AG04449 (cell line): ENCODE measurements at regions of chr2 and their contacts with region 1.

Region 1: GRCh38 chr2:235595422-235596010 is 101.7 kb downstream of the AGAP1 start:
- DNase-seq: no peak
- H3K4me3 ChIP-seq: no peak overlapping the region
- CTCF ChIP-seq: peak; percentile 87

Region 2: GRCh38 chr2:235135990-235136561 is 459.4 kb before region 1 on chr2:
- CTCF ChIA-PET with region 1: interaction called, 340 read pairs
- POLR2A ChIA-PET with region 1: no interaction called
- DNase-seq: peak; percentile 9
- H3K4me3 ChIP-seq: no peak overlapping the region
- CTCF ChIP-seq: peak; percentile 93

Region 3: DNA sequence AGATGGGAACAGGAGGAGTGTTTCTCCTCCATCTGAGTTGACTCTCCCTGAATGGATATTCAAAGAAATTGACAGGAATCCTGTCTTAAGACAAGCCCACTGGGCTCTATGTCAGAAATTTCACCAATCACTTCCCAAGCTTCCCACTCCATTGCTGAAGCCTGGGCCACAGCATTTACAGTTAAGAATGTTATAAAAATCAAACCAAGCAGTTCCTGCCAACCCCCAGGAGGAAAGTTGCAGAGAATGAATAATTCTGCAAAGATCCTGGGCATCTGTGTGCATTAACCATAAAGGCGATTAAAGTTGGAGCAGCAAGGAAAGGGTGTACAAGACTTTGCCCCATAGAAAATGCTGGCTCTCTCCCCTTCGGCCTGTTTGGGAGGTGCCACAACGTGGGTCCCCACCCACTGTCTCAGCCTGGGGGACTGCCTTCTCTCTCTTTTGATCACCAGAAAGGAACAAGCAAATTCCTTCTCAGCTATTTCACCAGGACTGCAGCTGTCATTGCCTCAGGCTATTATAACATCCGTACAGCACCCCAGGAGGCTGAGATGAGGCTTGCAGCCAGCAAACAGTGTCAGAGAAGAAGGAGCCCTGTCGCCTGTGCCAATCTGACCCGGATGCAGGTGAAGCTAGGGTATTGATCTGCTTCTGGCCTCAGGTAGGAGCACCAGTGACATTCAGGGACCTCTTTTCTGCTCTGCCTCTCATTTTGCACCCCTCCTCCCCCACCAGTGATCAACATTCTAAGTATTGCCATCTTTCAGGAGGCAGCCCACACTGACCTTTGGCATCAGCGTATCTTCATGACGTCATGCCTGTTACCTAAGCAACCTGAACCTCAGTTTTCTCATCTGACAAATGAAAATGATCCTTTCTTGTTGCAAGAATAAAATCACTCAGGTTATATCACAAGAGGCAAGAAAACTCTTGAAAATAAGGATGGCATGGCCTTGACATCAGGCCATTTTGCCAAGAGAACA is 424.7 kb before region 1 on chr2:
- CTCF ChIA-PET with region 1: no interaction called
- POLR2A ChIA-PET with region 1: no interaction called
- DNase-seq: peak; percentile 55
- H3K4me3 ChIP-seq: peak overlapping the region; percentile 21
- CTCF ChIP-seq: peak; percentile 51

Region 4: DNA sequence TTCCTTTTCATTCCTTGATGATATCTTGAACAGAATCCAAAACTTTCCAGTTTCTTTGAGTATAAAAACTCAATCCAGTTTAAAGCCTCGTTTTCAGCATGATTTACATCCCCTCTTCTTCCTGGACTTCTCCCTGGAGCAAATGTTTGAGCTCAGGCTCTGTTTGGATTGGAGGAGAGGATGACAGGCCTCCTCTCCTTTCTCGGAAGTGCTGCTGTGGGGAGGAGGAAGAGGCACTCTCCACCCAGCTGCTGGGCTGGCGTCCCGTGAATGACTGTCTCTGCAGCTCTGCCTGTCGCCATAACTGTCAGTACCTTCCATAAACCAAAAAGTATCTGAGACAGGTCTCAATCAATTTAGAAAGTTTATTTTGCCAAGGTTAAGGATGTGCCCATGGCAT is 339.8 kb before region 1 on chr2:
- CTCF ChIA-PET with region 1: no interaction called
- POLR2A ChIA-PET with region 1: no interaction called
- DNase-seq: no peak
- H3K4me3 ChIP-seq: no peak overlapping the region
- CTCF ChIP-seq: no peak

Region 5: GRCh38 chr2:235534678-235535422 is 60.7 kb before region 1 on chr2:
- CTCF ChIA-PET with region 1: no interaction called
- POLR2A ChIA-PET with region 1: no interaction called
- DNase-seq: no peak
- H3K4me3 ChIP-seq: no peak overlapping the region
- CTCF ChIP-seq: no peak

Region 6: GRCh38 chr2:235577404-235578330 is 17.8 kb before region 1 on chr2:
- CTCF ChIA-PET with region 1: interaction called, 137 read pairs
- POLR2A ChIA-PET with region 1: no interaction called
- DNase-seq: no peak
- H3K4me3 ChIP-seq: no peak overlapping the region
- CTCF ChIP-seq: no peak

Region 7: GRCh38 chr2:235669269-235669831 is 73.8 kb after region 1 on chr2:
- CTCF ChIA-PET with region 1: interaction called, 106 read pairs
- POLR2A ChIA-PET with region 1: no interaction called
- DNase-seq: no peak
- H3K4me3 ChIP-seq: peak overlapping the region; percentile 55
- CTCF ChIP-seq: no peak

Region 8: DNA sequence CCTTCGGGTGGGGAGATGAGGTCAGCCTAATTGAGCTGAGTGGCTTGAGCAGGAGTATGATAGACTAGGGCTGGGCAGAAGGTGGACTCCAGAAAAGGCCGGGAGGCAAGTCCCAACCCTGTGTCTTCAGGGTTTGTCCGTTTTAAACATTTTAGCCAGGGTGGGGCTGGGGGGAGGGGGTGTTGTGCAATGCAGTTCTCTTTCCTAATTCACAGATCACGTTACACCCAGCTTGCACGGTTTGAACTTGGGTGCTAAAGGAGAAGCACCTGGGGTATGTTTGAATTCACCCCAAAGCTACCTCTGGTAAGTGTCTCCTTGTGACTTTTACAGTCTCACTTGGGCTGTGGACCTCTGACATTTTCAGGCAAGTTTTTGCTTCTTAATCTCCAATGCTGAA is 131.7 kb after region 1 on chr2:
- CTCF ChIA-PET with region 1: interaction called, 11 read pairs
- POLR2A ChIA-PET with region 1: no interaction called
- DNase-seq: no peak
- H3K4me3 ChIP-seq: no peak overlapping the region
- CTCF ChIP-seq: no peak

Region 9: DNA sequence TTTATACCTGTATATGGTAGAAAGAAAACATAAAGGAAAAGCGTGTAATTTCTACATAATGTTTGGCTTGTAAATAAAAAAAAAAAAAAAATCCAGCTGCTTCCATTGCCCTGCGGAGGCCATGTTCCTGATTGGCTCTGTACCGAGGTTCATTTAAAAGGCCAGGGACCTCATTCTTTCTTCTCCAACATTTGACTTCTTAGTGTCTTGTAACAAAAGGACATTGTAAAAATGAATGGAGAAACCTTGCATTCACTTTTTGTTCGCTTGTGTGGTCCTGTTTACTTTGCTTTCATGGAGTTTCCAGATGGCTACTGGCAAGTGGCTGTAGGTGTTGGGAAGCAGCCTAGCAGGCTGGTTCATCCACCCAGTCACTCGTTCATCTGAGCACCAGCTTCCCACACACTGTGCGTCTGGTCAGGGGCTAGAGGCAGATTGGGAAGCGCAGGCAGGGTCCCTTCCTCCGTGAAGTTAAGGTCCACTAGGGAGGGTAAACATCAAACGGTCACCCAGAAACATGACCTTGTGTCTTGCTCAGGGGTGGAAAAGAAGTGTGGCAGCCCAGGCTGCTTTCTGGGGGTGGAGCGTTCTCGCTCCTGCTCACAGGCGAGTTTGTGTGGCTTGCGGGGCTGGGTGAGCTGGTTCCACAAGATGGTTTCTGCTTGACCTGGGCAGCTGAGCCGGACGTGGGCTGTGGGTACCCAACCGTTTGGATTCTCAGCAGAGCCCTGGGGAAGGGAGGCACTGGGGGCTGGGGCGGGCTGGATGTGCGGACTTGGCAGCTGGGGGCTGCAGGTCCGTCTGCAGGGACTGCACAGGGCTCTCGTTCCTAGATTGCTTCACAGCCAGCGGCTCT is 159.1 kb after region 1 on chr2:
- CTCF ChIA-PET with region 1: interaction called, 484 read pairs
- POLR2A ChIA-PET with region 1: no interaction called
- DNase-seq: no peak
- H3K4me3 ChIP-seq: no peak overlapping the region
- CTCF ChIP-seq: no peak